ENCODE measurements at regions of chr1 and their contacts with region 1.

Region 1: GRCh38 chr1:42646056-42646455 is 12.2 kb upstream of the PPIH start:
- DNase-seq: no peak
- ATAC-seq: no peak
- H3K4me3 ChIP-seq: no peak overlapping the region
- H3K4me3 Mint-ChIP-seq: no peak overlapping the region
- H3K27ac ChIP-seq: no peak overlapping the region
- H3K27ac Mint-ChIP-seq: no peak overlapping the region
- H3K4me1 ChIP-seq: no peaks in the 10 kb centered on the region
- H3K4me1 Mint-ChIP-seq: no peaks in the 10 kb centered on the region
- H3K27me3 ChIP-seq: no peaks in the 10 kb centered on the region
- H3K27me3 Mint-ChIP-seq: no peaks in the 10 kb centered on the region
- CTCF ChIP-seq: no peak

Region 2: GRCh38 chr1:42690477-42691156 is 44.6 kb after region 1 on chr1:
- CTCF ChIA-PET with region 1: interaction called, 3 read pairs
- POLR2A ChIA-PET with region 1: no interaction called
- intact Hi-C with region 1: loop called in 1 of 2 experiments (anchors 10 kb)
- DNase-seq: peak in 1 of 14 experiments; percentile 14
- ATAC-seq: peak; percentile 44
- H3K4me3 ChIP-seq: no peak overlapping the region
- H3K4me3 Mint-ChIP-seq: no peak overlapping the region
- H3K27ac ChIP-seq: no peak overlapping the region
- H3K27ac Mint-ChIP-seq: peak overlapping the region; percentile 52
- H3K4me1 ChIP-seq: peaks cover 41% of the 10 kb centered on the region
- H3K4me1 Mint-ChIP-seq: peaks cover 97% of the 10 kb centered on the region
- H3K27me3 ChIP-seq: no peaks in the 10 kb centered on the region
- H3K27me3 Mint-ChIP-seq: no peaks in the 10 kb centered on the region
- CTCF ChIP-seq: peak; percentile 12

Measured in CD4-positive, alpha-beta T cell (primary cell).